ENCODE measurements at regions of chr12 and their contacts with region 1.

Region 1: DNA sequence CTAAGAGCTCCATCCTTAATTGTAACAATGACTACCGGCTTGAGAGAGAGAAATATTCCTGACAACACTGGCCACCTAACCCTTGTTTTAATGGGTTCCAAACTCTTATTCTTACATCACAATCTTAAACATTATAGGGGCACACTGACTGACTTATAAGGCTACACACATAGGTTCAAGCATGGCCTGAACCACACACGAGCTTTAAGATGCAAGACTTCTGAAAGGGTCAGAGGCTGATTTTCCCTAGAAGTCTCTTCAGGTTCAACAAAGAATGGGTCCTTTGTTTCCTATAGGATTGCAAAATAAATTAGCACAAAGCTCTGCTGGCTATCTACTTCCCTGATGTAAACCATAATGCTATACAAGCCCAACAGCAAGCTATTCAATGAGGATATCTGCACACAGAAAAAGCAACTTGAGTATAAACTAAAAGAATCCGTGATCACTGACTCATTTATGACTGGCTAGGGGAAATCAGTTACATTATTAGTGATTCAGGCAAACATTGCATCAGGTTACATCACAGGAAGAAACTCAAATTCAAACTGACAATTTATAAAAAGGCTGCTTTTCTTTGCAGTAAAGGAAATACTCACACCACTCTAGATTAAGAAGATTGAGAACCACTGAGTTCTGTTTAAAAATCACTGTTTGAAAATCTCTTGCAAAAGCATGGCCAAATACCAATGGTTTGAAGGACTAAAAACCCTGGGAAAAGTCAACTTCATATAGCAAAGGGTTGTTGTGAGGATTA is 8.5 kb downstream of the BTG1 start:
- DNase-seq: no peak
- ATAC-seq: no peak
- H3K4me3 Mint-ChIP-seq: peak overlapping the region; percentile 89 to 100 (median 98)
- H3K27ac Mint-ChIP-seq: peak overlapping the region; percentile 89 to 100 (median 99)
- H3K4me1 Mint-ChIP-seq: peaks cover 37 to 74% (median 48%) of the 10 kb centered on the region in 4 donors
- H3K27me3 Mint-ChIP-seq: no peaks in the 10 kb centered on the region

Region 2: DNA sequence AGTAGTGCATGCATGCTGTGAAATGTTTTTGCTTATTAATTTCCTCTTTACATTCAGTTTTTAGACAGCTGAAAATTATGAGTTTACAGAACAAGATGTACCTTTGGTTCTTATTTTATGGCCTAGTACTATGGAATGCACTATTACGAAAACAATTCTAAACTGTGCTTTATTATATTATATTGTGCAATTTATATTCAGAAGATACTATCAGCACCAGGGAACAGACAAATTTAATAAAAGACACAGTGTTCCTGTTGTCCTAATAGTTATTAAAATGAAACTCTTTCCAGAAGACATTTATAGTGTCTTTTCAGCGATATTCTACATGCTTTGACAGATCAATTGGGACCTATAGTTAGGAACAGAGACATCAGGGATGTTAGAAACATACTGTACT is 418.8 kb before region 1 on chr12:
- POLR2A ChIA-PET with region 1: no interaction called
- DNase-seq: no peak
- ATAC-seq: no peak
- H3K4me3 Mint-ChIP-seq: no peak overlapping the region
- H3K27ac Mint-ChIP-seq: no peak overlapping the region
- H3K4me1 Mint-ChIP-seq: peaks cover 0 to 2% (median 0%) of the 10 kb centered on the region in 4 donors
- H3K27me3 Mint-ChIP-seq: no peaks in the 10 kb centered on the region

Region 3: GRCh38 chr12:92034858-92035401 is 102.2 kb before region 1 on chr12:
- POLR2A ChIA-PET with region 1: interaction called, 283 read pairs
- DNase-seq: peak; percentile 32 to 77 (median 68)
- ATAC-seq: peak; percentile 51 to 52
- H3K4me3 Mint-ChIP-seq: peak overlapping the region; percentile 83 to 96 (median 92)
- H3K27ac Mint-ChIP-seq: peak overlapping the region; percentile 91 to 100 (median 99)
- H3K4me1 Mint-ChIP-seq: peaks cover 36 to 96% (median 92%) of the 10 kb centered on the region in 4 donors
- H3K27me3 Mint-ChIP-seq: no peaks in the 10 kb centered on the region

Region 4: GRCh38 chr12:92041742-92042141 is 95.4 kb before region 1 on chr12:
- POLR2A ChIA-PET with region 1: interaction called, 283 read pairs
- DNase-seq: peak in 5 of 10 donors; percentile 18 to 66 (median 63)
- ATAC-seq: peak; percentile 85 to 95
- H3K4me3 Mint-ChIP-seq: peak overlapping the region; percentile 26 to 86 (median 66)
- H3K27ac Mint-ChIP-seq: peak overlapping the region; percentile 60 to 97 (median 91)
- H3K4me1 Mint-ChIP-seq: peaks cover 22 to 80% (median 77%) of the 10 kb centered on the region in 4 donors
- H3K27me3 Mint-ChIP-seq: no peaks in the 10 kb centered on the region

Region 5: DNA sequence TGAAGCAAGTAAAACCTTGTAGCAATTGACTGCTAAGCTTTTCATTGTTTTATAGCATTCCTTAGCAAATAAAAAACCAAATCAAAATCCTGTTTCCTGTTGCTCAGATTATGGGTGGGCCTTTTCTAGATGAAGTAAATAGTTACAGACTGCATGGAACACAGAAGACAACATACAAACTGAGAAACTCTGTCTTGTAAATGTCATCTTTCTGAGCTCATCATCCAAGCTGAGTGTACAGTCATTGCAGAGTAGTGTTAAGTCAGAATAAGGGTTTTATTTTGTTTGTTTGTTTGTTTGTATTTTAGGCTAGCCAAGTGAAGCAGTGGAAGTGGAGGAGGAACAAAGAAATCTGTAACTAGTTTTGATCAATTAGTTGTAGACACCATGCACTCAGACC is 32.9 kb after region 1 on chr12:
- POLR2A ChIA-PET with region 1: no interaction called
- DNase-seq: no peak
- ATAC-seq: no peak
- H3K4me3 Mint-ChIP-seq: no peak overlapping the region
- H3K27ac Mint-ChIP-seq: peak overlapping the region in 4 of 10 donors; percentile 0 to 29 (median 13)
- H3K4me1 Mint-ChIP-seq: peaks cover 19 to 53% (median 35%) of the 10 kb centered on the region in 4 donors
- H3K27me3 Mint-ChIP-seq: no peaks in the 10 kb centered on the region

Measured in naive thymus-derived CD8-positive, alpha-beta T cell (primary cell).